ENCODE measurements at regions of chr13 and their contacts with region 1.

Region 1: GRCh38 chr13:29835280-29836061 is 14.9 kb downstream of the UBL3 start:
- DNase-seq: no peak
- H3K4me3 Mint-ChIP-seq: no peak overlapping the region
- H3K27ac Mint-ChIP-seq: no peak overlapping the region
- H3K4me1 Mint-ChIP-seq: peaks cover 13% of the 10 kb centered on the region
- H3K27me3 Mint-ChIP-seq: peaks cover 4% of the 10 kb centered on the region

Region 2: DNA sequence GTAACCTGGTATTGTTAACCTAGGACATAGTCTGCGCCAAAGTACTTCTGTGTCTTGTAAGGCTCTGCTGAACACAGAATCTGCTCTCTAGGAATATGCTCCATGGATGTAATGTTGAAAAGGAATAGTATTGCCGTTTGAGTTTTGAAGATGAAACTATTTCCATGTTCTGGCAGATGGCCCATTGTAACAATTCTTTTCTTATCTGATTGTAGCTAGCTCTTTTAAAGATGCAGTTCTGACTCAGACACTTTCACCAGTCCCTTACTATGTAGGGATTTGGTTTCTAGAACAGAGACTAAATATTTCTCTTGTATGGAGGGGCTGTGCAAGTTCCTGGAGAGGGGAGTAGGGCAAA is 829.7 kb before region 1 on chr13:
- intact Hi-C with region 1: no loop called
- DNase-seq: no peak
- H3K4me3 Mint-ChIP-seq: no peak overlapping the region
- H3K27ac Mint-ChIP-seq: no peak overlapping the region
- H3K4me1 Mint-ChIP-seq: no peaks in the 10 kb centered on the region
- H3K27me3 Mint-ChIP-seq: peaks cover 1% of the 10 kb centered on the region

Region 3: GRCh38 chr13:29805994-29806979 is 29.2 kb before region 1 on chr13:
- intact Hi-C with region 1: loop called (anchors 1 kb)
- DNase-seq: no peak
- H3K4me3 Mint-ChIP-seq: no peak overlapping the region
- H3K27ac Mint-ChIP-seq: no peak overlapping the region
- H3K4me1 Mint-ChIP-seq: no peaks in the 10 kb centered on the region
- H3K27me3 Mint-ChIP-seq: peaks cover 4% of the 10 kb centered on the region

Region 4: GRCh38 chr13:31236211-31236786 is 1400.8 kb after region 1 on chr13:
- intact Hi-C with region 1: no loop called
- DNase-seq: no peak
- H3K4me3 Mint-ChIP-seq: no peak overlapping the region
- H3K27ac Mint-ChIP-seq: no peak overlapping the region
- H3K4me1 Mint-ChIP-seq: no peaks in the 10 kb centered on the region
- H3K27me3 Mint-ChIP-seq: no peaks in the 10 kb centered on the region